Cardiac septum (tissue), 1 donor: ENCODE measurements at regions of chr19 and their contacts with region 1.

Region 1: DNA sequence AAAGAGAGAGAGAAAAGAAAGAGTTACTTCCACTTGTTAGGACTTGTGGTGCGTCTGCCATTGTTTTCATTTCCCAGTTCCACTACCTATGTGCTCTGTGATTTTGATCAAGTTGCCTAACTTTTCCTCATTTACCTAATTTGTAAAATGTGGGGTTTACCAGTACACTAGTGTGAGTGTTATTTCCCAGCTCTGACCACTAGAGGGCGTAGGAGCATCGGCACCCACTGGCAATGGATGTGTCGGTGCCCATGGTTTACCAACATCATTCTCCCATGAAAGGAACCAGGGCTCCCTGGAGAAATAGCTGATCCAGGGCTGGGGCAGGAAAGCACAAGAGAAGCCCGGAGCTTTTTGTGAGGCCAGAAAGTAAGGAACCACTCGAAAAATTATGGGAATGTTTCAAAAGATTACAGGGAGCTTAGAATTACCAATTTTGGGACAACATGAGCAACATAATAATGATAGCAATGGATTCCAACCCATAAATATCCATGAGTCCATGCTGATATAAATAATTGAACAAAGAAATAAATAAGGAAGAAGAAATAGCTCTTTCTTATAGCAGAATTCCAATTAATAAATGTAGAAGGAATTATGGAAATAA is 15.1 kb upstream of the CEACAM4 start:
- DNase-seq: no peak

Region 2: DNA sequence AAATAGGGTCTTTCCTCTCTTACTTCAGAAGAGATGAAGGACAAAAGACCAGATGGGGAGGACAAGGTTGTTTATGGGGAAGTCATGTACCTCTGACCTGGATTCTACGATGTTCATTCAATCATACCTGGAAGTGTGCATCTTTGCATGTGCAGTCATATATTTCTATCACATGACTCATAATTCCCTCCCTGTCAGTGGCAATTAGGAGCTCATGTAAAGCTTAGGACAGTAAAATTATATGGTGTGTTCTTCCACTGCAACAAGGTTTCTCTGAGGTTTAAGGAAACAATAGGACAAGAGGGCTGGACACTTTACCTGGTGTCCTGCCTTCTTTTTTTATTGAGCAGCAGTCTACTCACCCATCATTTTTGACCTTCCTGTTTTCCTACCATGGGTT is 26.3 kb after region 1 on chr19:
- intact Hi-C with region 1: no loop called
- DNase-seq: no peak

Region 3: GRCh38 chr19:41746593-41747227 is 104.7 kb after region 1 on chr19:
- intact Hi-C with region 1: loop called (anchors 5 kb)
- DNase-seq: no peak